Activated naive CD4-positive, alpha-beta T cell treated with anti-CD3 and anti-CD28 coated beads for 36 hours (primary cell): ENCODE measurements at regions of chr2 and their contacts with region 1.

Region 1: DNA sequence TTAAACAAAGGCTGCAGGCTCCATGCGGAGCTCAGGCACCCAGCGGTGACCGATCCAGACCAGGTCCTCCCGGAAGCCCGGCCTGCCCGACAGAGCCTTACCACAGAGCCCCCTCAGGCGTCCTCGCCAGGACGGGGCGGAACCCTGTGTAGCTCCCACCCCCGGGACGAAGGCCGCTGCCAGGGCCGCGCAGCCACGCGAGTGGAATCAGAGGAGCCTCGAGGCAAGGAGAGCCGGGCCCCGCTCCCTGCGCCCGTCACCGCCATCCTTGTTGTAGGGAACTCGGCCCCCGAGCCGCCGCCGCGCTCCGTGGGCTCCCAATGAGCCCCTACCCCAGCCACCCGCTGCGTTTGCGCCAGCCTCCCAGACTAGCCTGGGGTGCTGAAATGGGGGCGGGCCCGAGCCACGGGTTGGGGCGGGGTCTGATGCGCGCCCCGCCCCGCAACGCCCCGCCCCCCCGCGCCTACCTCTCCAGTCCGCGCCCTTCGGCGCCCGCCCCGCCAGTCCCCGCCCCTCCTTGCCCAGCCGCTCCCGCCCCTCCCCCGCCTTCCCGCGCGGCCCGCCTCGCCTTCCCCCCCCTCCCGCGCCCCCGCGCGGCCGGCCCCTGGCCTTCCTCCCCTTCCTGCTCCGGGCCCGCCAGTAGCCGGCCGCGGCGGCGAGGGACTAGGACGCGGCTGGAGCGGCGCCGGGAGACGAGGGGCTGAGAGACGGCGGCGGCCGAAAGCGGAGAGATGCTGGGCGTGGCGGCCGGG is at the start of gene LIMS1:
- DNase-seq: peak; percentile 89
- H3K4me3 Mint-ChIP-seq: peak within 1 kb of the TSS; percentile 96
- H3K27ac Mint-ChIP-seq: peak within 1 kb of the TSS; percentile 82
- H3K4me1 Mint-ChIP-seq: peaks cover 31% of the 10 kb centered on the region
- H3K27me3 Mint-ChIP-seq: no peaks in the 10 kb centered on the region
- total RNA-seq, gene LIMS1: 43.8 to 47.1 TPM

Region 2: DNA sequence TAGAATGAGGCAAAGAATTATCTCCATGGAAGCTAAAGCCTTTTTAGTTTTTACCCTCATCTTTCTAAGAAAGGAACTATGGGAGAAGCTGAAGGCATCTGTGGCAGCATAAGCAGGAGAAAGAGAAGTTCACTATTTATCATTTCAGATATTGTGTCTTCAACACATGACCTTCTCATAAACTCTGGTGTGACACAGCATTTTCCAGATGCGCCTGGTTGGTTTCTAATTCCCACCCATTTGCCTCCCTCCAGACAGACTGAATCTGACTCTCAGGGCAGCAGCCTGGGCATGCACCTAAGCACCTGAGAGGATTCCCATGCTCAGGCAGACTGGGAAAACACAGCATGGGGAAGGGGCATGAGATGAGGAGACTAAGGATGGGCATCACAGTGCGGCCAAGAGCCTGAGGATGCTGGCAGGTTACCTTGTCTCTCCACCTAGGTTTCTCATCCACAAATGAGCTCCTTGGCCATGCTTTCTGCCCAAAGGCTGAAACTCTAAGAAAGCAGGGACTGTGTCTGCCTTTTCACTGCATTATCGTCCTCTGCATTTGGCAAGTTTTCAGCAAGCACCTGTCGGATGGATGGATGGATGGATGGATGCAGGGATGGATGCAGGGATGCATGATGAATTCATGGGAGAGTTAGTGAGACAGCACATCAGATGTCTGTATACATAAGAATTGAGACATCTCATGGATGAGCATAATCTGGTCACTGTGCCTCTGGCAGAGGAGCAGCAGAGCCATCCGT is 185.0 kb before region 1 on chr2:
- CTCF ChIA-PET with region 1: no interaction called
- intact Hi-C with region 1: no loop called
- DNase-seq: no peak
- H3K4me3 Mint-ChIP-seq: no peak overlapping the region
- H3K27ac Mint-ChIP-seq: no peak overlapping the region
- H3K4me1 Mint-ChIP-seq: no peaks in the 10 kb centered on the region
- H3K27me3 Mint-ChIP-seq: peaks cover 8% of the 10 kb centered on the region

Region 3: GRCh38 chr2:108417255-108417654 is 116.8 kb before region 1 on chr2:
- CTCF ChIA-PET with region 1: no interaction called
- intact Hi-C with region 1: no loop called
- DNase-seq: peak; percentile 10
- H3K4me3 Mint-ChIP-seq: no peak overlapping the region
- H3K27ac Mint-ChIP-seq: no peak overlapping the region
- H3K4me1 Mint-ChIP-seq: no peaks in the 10 kb centered on the region
- H3K27me3 Mint-ChIP-seq: no peaks in the 10 kb centered on the region

Region 4: DNA sequence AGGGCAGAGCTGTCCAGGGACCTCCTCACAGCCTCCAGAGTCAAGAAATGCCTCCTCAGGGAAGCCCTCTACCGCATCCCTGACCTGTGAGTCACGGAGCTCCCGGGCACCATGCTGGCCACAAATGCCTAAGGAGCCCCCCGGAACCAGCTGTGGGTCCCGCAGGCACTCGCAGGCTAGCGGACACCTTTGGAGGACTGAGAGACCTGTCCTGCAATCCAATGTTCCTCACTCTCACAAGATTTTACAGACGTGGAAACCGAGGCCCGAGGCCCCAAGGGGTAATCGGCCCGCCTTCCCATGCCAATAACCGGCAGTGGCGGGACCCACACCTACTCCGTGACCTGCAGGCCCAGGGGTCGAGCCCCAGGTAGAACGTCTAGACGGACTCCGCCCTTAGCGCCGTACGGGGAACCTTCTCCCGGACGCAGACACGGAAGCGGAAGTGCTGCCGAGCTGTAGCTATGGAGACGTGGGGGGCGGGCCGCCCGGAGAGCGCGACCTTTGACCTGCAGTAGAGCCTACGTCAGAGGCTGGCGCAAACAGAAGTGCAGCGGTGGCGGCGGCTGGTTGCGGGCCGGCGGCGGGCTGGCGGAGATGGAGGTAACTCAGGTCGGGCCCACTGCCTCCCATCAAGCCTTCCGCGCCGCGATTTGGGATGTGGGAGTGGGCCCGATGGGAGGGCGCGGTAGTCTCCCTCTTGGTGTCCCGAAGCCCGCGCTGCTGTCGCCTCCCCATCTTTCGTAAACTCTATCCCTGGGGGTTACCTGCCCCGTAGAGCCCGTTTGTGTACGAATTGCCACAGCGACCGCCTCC is 85.1 kb before region 1 on chr2 and contains the start of gene GCC2:
- CTCF ChIA-PET with region 1: no interaction called
- intact Hi-C with region 1: loop called (anchors 1 kb)
- DNase-seq: peak; percentile 97
- H3K4me3 Mint-ChIP-seq: peak within 1 kb of the TSS; percentile 87
- H3K27ac Mint-ChIP-seq: peak within 1 kb of the TSS; percentile 91
- H3K4me1 Mint-ChIP-seq: peaks cover 27% of the 10 kb centered on the region
- H3K27me3 Mint-ChIP-seq: no peaks in the 10 kb centered on the region
- total RNA-seq, gene GCC2: 33.5 to 39.4 TPM

Region 5: GRCh38 chr2:108492364-108492763 is 41.6 kb before region 1 on chr2:
- CTCF ChIA-PET with region 1: no interaction called
- intact Hi-C with region 1: loop called (anchors 2 kb)
- DNase-seq: no peak
- H3K4me3 Mint-ChIP-seq: no peak overlapping the region
- H3K27ac Mint-ChIP-seq: peak overlapping the region; percentile 11
- H3K4me1 Mint-ChIP-seq: peaks cover 18% of the 10 kb centered on the region
- H3K27me3 Mint-ChIP-seq: no peaks in the 10 kb centered on the region

Region 6: GRCh38 chr2:108786354-108787199 is 252.6 kb after region 1 on chr2 and contains the start of gene CCDC138:
- CTCF ChIA-PET with region 1: no interaction called
- intact Hi-C with region 1: loop called (anchors 1 kb)
- DNase-seq: peak; percentile 92
- H3K4me3 Mint-ChIP-seq: peak within 1 kb of the TSS; percentile 97
- H3K27ac Mint-ChIP-seq: peak within 1 kb of the TSS; percentile 87
- H3K4me1 Mint-ChIP-seq: peaks cover 14% of the 10 kb centered on the region
- H3K27me3 Mint-ChIP-seq: no peaks in the 10 kb centered on the region
- total RNA-seq, gene CCDC138: 7.4 to 9.5 TPM